Thyroid gland (tissue), 4 donors: ENCODE measurements at regions of chr7 and their contacts with region 1.

Region 1: DNA sequence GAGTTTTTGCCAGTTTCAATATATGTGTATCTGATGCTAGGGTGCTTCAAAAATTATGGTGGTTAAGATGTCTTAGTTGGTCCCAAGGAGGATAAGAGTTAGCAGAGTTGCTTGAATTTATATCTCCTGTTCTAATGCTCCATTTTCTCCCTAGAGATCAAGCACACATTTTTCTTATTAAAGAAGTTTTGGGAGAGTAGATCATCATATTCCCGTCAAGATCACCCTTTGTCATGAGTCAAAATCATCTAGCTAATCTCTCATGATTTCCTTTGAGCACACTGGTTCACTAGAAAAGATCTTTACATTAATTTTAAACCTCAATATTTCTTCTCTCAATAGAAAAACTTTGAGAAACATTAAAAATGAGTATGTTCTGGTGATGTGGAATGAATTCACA is 429.9 kb upstream of the SEMA3A start:
- DNase-seq: no peak
- H3K4me3 ChIP-seq: no peak overlapping the region
- H3K27ac ChIP-seq: no peak overlapping the region
- H3K4me1 ChIP-seq: no peaks in the 10 kb centered on the region
- H3K27me3 ChIP-seq: no peaks in the 10 kb centered on the region
- CTCF ChIP-seq: no peak
- POLR2A ChIP-seq: no peak

Region 2: GRCh38 chr7:84688671-84689070 is 64.1 kb after region 1 on chr7:
- intact Hi-C with region 1: loop called (anchors 10 kb)
- DNase-seq: no peak
- H3K4me3 ChIP-seq: no peak overlapping the region
- H3K27ac ChIP-seq: no peak overlapping the region
- H3K4me1 ChIP-seq: no peaks in the 10 kb centered on the region
- H3K27me3 ChIP-seq: no peaks in the 10 kb centered on the region
- CTCF ChIP-seq: no peak
- POLR2A ChIP-seq: no peak